ENCODE measurements at regions of chr17 and their contacts with region 1.

Region 1: GRCh38 chr17:42388381-42389134 is at the start of gene STAT3:
- ATAC-seq: peak; percentile 80 to 94 (median 93)
- H3K4me3 ChIP-seq: peak within 1 kb of the TSS; percentile 75 to 96 (median 92)
- H3K27ac ChIP-seq: peak within 1 kb of the TSS; percentile 84 to 93
- H3K4me1 ChIP-seq: peaks cover 14 to 17% of the 10 kb centered on the region in 2 donors
- total RNA-seq, gene STAT3: 31.4 to 386 (median 106) TPM

Region 2: GRCh38 chr17:41750862-41751261 is 637.7 kb before region 1 on chr17:
- in situ Hi-C with region 1: no loop called
- ATAC-seq: no peak
- H3K4me3 ChIP-seq: no peak overlapping the region
- H3K27ac ChIP-seq: no peak overlapping the region
- H3K4me1 ChIP-seq: no peaks in the 10 kb centered on the region

Region 3: GRCh38 chr17:42221937-42222745 is 166.4 kb before region 1 on chr17:
- in situ Hi-C with region 1: loop called in 1 of 9 experiments (anchors 25 kb)
- ATAC-seq: peak; percentile 47 to 95 (median 70)
- H3K4me3 ChIP-seq: no peak overlapping the region
- H3K27ac ChIP-seq: no peak overlapping the region
- H3K4me1 ChIP-seq: no peaks in the 10 kb centered on the region

Region 4: GRCh38 chr17:42287305-42287925 is 101.1 kb before region 1 on chr17:
- in situ Hi-C with region 1: no loop called
- ATAC-seq: peak in 4 of 8 experiments; percentile 3 to 60 (median 34)
- H3K4me3 ChIP-seq: no peak overlapping the region
- H3K27ac ChIP-seq: no peak overlapping the region
- H3K4me1 ChIP-seq: peaks cover 0 to 16% of the 10 kb centered on the region in 2 donors